Activated naive CD8-positive, alpha-beta T cell treated with anti-CD3 and anti-CD28 coated beads, Interleukin-2, amount 10 ng/mL, durations not matched to agents 7 days and 5 days (primary cell): ENCODE measurements at regions of chr1 and their contacts with region 1.

Region 1: DNA sequence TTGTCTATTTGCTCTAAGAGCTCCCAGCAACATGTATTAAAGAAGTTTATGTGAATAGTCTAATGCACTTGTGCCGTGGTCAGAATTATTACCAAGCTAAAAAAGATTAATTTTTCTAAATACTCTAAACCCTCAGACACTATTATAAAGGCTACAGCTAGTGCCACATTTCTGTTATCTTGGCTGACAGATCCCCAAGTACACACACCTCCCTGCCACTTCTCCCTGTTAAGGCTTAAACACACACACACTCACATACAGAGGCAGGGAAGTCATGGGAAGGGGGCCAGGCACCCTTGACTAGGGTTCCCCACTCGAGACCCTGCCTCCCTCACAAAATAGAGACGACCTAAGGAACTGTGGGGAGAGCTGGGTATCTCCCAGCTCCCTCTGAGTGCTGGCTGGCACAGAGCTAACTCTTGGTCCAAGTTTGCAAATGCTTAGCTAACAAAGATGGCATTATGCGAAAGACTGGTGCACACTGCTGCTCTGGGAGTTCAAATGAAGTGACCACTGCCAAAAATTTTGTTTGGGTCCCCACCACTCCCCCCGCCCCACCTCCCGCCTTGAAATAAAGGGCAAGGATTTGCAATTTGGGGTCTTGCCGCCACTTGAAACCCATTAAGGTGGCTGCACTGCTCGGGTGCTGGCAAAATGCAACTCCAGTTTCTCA is 9.8 kb downstream of the SSBP3 start:
- DNase-seq: no peak
- ATAC-seq: no peak
- H3K4me3 Mint-ChIP-seq: no peak overlapping the region
- H3K27ac Mint-ChIP-seq: peak overlapping the region; percentile 46
- H3K4me1 Mint-ChIP-seq: peaks cover 25% of the 10 kb centered on the region
- H3K27me3 Mint-ChIP-seq: no peaks in the 10 kb centered on the region

Region 2: DNA sequence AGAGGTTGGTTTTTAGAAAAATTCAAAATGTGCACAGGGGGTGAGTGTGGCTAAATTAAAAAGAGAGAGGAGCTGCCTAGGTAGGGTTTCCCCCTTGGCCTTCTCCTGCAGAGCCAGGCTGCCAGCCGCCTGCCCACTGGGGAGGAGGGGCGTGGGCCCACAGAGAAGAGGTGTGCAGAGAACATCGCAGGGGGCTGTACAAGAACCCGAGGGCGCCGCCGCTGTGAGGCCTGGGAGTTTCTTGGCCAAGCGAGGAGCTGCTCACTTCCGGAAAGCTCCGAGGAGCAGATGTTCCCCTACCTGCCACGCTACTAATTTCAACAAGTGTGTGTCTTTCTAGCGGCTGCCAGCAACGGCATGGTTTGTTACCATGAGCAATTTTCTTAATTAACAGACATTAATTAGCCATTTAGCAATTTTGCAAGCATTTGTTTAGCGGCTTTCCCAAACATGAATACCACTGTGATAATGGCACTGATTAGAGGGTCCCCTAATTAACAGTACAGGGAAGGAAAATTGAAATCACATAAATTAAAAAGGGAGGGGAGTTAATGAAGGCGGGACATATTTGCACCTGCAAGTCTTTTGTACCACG is 136.8 kb before region 1 on chr1:
- POLR2A ChIA-PET with region 1: interaction called, 10 read pairs
- DNase-seq: no peak
- ATAC-seq: no peak
- H3K4me3 Mint-ChIP-seq: no peak overlapping the region
- H3K27ac Mint-ChIP-seq: no peak overlapping the region
- H3K4me1 Mint-ChIP-seq: peaks cover 14% of the 10 kb centered on the region
- H3K27me3 Mint-ChIP-seq: no peaks in the 10 kb centered on the region

Region 3: GRCh38 chr1:54372978-54373377 is 23.4 kb before region 1 on chr1:
- POLR2A ChIA-PET with region 1: no interaction called
- DNase-seq: no peak
- ATAC-seq: peak; percentile 25
- H3K4me3 Mint-ChIP-seq: peak overlapping the region; percentile 44
- H3K27ac Mint-ChIP-seq: no peak overlapping the region
- H3K4me1 Mint-ChIP-seq: peaks cover 63% of the 10 kb centered on the region
- H3K27me3 Mint-ChIP-seq: no peaks in the 10 kb centered on the region

Region 4: DNA sequence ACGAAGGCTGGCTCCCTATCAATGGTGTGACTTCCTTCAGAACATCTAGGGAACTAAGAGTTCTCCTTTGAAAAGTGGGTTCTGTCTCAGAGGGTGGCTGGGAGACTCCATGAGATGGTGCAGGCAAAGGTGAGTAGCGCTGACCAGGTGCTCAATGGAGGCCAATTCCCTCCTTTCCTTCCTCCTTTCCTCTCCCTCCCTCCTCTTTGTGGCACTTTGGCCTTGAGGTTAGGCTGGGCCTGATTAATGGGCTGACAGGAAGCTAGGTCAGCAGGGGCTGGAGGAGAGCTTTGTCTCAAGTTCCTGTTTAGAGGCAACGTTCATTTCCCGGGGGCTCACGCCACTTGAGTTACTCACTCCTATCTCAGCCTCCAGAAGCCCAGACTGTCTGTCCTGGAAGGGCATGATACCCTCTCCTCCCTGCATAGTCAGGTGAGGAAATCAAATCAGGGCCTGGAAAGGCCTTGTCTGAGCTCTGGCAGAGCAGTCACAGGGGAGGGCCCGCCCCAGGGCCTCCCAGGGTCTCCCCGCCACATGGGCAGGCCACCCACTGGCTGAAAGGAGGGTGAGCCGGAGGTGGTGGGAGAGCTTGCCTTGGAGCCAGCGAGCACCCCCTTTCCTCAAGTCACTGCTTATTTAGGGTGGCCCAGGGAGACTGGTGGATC is 68.2 kb after region 1 on chr1:
- POLR2A ChIA-PET with region 1: no interaction called
- DNase-seq: no peak
- ATAC-seq: peak; percentile 27
- H3K4me3 Mint-ChIP-seq: peak overlapping the region; percentile 45
- H3K27ac Mint-ChIP-seq: peak overlapping the region; percentile 89
- H3K4me1 Mint-ChIP-seq: peaks cover 43% of the 10 kb centered on the region
- H3K27me3 Mint-ChIP-seq: no peaks in the 10 kb centered on the region

Region 5: GRCh38 chr1:54542120-54542961 is 145.9 kb after region 1 on chr1:
- POLR2A ChIA-PET with region 1: no interaction called
- DNase-seq: peak; percentile 74
- ATAC-seq: peak; percentile 87
- H3K4me3 Mint-ChIP-seq: peak overlapping the region; percentile 80
- H3K27ac Mint-ChIP-seq: peak overlapping the region; percentile 60
- H3K4me1 Mint-ChIP-seq: peaks cover 15% of the 10 kb centered on the region
- H3K27me3 Mint-ChIP-seq: peaks cover 27% of the 10 kb centered on the region